B cell (primary cell): ENCODE measurements at regions of chr12 and their contacts with region 1.

Region 1: GRCh38 chr12:16766736-16767135 is 160.8 kb upstream of the LMO3 start:
- DNase-seq: no peak
- ATAC-seq: no peak
- H3K4me3 ChIP-seq: no peak overlapping the region
- H3K4me3 Mint-ChIP-seq: no peak overlapping the region
- H3K27ac ChIP-seq: no peak overlapping the region
- H3K27ac Mint-ChIP-seq: no peak overlapping the region
- H3K4me1 ChIP-seq: no peaks in the 10 kb centered on the region
- H3K4me1 Mint-ChIP-seq: no peaks in the 10 kb centered on the region
- H3K27me3 ChIP-seq: no peaks in the 10 kb centered on the region
- H3K27me3 Mint-ChIP-seq: no peaks in the 10 kb centered on the region
- CTCF ChIP-seq: no peak

Region 2: GRCh38 chr12:17438141-17438540 is 671.4 kb after region 1 on chr12:
- CTCF ChIA-PET with region 1: no interaction called
- POLR2A ChIA-PET with region 1: no interaction called
- intact Hi-C with region 1: no loop called
- DNase-seq: no peak
- ATAC-seq: no peak
- H3K4me3 ChIP-seq: no peak overlapping the region
- H3K4me3 Mint-ChIP-seq: no peak overlapping the region
- H3K27ac ChIP-seq: no peak overlapping the region
- H3K27ac Mint-ChIP-seq: no peak overlapping the region
- H3K4me1 ChIP-seq: no peaks in the 10 kb centered on the region
- H3K4me1 Mint-ChIP-seq: no peaks in the 10 kb centered on the region
- H3K27me3 ChIP-seq: no peaks in the 10 kb centered on the region
- H3K27me3 Mint-ChIP-seq: no peaks in the 10 kb centered on the region
- CTCF ChIP-seq: no peak

Region 3: GRCh38 chr12:17550011-17550410 is 783.3 kb after region 1 on chr12:
- CTCF ChIA-PET with region 1: no interaction called
- POLR2A ChIA-PET with region 1: no interaction called
- intact Hi-C with region 1: loop called (anchors 10 kb)
- DNase-seq: no peak
- ATAC-seq: no peak
- H3K4me3 ChIP-seq: no peak overlapping the region
- H3K4me3 Mint-ChIP-seq: no peak overlapping the region
- H3K27ac ChIP-seq: no peak overlapping the region
- H3K27ac Mint-ChIP-seq: no peak overlapping the region
- H3K4me1 ChIP-seq: no peaks in the 10 kb centered on the region
- H3K4me1 Mint-ChIP-seq: no peaks in the 10 kb centered on the region
- H3K27me3 ChIP-seq: no peaks in the 10 kb centered on the region
- H3K27me3 Mint-ChIP-seq: no peaks in the 10 kb centered on the region
- CTCF ChIP-seq: no peak